Heart left ventricle (tissue), 16 donors: ENCODE measurements at regions of chr13 and their contacts with region 1.

Region 1: GRCh38 chr13:44364348-44365049 is 9.1 kb upstream of the SERP2 start:
- DNase-seq: no peak
- ATAC-seq: peak in 3 of 4 donors; percentile 25 to 54 (median 53)
- H3K4me3 ChIP-seq: no peak overlapping the region
- H3K27ac ChIP-seq: peak overlapping the region in 7 of 12 donors; percentile 15 to 62 (median 26)
- H3K4me1 ChIP-seq: peaks cover 0 to 30% (median 2%) of the 10 kb centered on the region in 12 donors
- H3K27me3 ChIP-seq: no peaks in the 10 kb centered on the region
- CTCF ChIP-seq: no peak
- POLR2A ChIP-seq: no peak

Region 2: GRCh38 chr13:44218501-44219240 is 145.8 kb before region 1 on chr13:
- intact Hi-C with region 1: no loop called
- DNase-seq: peak; percentile 60 to 78 (median 68)
- ATAC-seq: peak; percentile 76 to 93 (median 90)
- H3K4me3 ChIP-seq: no peak overlapping the region
- H3K27ac ChIP-seq: peak overlapping the region in 11 of 12 donors; percentile 34 to 82 (median 57)
- H3K4me1 ChIP-seq: peaks cover 0 to 42% (median 9%) of the 10 kb centered on the region in 12 donors
- H3K27me3 ChIP-seq: no peaks in the 10 kb centered on the region
- CTCF ChIP-seq: no peak
- POLR2A ChIP-seq: no peak

Region 3: DNA sequence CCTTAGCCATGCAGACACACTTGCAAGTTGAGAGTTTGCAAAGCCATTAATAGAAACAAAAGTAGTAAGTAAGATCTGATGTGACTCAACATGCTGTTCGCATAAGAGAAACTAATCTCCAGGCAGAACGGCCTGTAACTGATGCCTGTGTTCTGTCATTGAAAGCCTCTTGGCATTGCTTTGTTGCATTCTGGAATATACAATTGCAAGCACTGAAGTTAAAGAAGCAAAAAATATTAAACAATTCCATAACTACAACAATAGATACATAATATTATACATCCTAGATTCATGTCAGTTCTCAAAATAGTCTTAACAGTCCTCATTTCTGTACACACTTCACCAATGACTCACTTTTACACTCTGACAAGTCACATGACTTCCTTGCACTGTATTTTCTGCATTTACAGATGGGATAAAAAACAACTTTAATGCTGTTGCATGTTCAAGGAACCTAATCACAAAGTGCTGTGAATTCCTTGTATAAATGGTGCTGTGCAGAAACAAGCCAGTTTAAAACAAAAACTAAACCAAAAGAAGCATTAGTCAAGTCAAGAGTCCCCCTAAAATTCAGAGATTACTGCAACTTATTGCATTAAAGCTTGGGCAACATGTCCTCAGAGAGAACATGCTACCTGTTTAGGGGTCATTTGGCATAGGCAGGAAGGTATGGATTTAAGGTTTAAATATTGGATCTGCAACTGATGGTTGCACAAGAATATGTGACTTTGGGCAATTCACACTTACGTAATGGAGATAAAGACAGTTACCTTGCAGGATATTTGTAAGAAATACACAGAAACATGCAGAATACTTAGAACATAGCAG is 70.4 kb before region 1 on chr13:
- intact Hi-C with region 1: loop called in 1 of 10 experiments (anchors 10 kb)
- DNase-seq: no peak
- ATAC-seq: peak; percentile 35 to 73 (median 56)
- H3K4me3 ChIP-seq: no peak overlapping the region
- H3K27ac ChIP-seq: peak overlapping the region in 10 of 12 donors; percentile 9 to 74 (median 26)
- H3K4me1 ChIP-seq: peaks cover 0 to 39% (median 22%) of the 10 kb centered on the region in 12 donors
- H3K27me3 ChIP-seq: no peaks in the 10 kb centered on the region
- CTCF ChIP-seq: no peak
- POLR2A ChIP-seq: no peak

Region 4: GRCh38 chr13:44312898-44313551 is 51.5 kb before region 1 on chr13:
- intact Hi-C with region 1: loop called in 1 of 10 experiments (anchors 5 kb)
- DNase-seq: no peak
- ATAC-seq: no peak
- H3K4me3 ChIP-seq: no peak overlapping the region
- H3K27ac ChIP-seq: no peak overlapping the region
- H3K4me1 ChIP-seq: peaks cover 0 to 26% (median 14%) of the 10 kb centered on the region in 12 donors
- H3K27me3 ChIP-seq: no peaks in the 10 kb centered on the region
- CTCF ChIP-seq: no peak
- POLR2A ChIP-seq: no peak